PC-3 (cell line): ENCODE measurements at regions of chr5 and their contacts with region 1.

Region 1: DNA sequence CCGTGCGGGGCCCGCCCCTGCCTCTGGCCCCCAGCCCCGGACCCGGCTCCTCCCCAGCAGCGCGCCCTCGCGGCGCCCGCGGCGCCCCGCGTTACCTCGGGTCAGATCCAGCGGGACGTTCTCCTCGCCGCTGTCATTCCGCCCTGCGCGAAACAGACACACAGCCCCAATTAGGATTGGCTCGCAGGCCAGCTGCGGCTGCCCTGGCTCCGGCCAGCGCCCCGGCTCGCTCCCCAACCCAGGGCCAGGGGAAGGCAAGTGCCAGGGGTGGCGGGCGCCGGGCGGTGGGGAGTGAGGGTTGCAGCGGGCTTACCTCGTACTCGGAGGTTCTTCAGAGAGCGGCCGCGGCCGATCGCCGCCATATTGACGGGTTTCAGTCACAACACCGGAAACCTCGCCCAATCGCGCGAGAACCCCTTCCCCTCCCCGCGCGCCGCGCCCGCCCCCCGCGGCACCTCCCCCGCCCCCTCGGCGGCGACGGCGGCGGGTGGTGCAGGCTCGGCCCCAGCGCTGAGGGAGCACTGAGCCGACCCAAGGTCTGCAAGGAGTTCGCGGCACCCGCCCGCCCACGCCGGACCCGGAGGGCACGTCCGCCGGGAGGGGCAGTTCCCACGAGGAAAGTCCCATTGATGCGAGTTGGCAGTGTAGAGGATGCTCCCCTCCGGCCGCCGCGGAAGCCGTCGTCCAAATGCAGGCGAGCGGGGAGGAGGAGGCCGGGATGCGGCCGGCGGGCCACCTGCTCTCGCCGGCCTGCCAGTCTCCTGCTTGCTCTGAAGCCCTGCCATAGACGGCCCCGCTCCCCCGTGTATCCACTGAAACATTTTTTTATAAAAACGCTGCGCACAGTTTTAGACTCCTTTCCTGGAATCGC is at the start of gene RICTOR:
- DNase-seq: peak; percentile 93
- ATAC-seq: peak; percentile 75
- H3K4me3 ChIP-seq: peak within 1 kb of the TSS; percentile 94
- H3K27ac ChIP-seq: peak within 1 kb of the TSS; percentile 87
- H3K4me1 ChIP-seq: peaks cover 40% of the 10 kb centered on the region
- H3K27me3 ChIP-seq: no peaks in the 10 kb centered on the region
- CTCF ChIP-seq: no peak
- total RNA-seq, gene RICTOR: 24.5 and 28.1 TPM in 2 replicates

Region 2: DNA sequence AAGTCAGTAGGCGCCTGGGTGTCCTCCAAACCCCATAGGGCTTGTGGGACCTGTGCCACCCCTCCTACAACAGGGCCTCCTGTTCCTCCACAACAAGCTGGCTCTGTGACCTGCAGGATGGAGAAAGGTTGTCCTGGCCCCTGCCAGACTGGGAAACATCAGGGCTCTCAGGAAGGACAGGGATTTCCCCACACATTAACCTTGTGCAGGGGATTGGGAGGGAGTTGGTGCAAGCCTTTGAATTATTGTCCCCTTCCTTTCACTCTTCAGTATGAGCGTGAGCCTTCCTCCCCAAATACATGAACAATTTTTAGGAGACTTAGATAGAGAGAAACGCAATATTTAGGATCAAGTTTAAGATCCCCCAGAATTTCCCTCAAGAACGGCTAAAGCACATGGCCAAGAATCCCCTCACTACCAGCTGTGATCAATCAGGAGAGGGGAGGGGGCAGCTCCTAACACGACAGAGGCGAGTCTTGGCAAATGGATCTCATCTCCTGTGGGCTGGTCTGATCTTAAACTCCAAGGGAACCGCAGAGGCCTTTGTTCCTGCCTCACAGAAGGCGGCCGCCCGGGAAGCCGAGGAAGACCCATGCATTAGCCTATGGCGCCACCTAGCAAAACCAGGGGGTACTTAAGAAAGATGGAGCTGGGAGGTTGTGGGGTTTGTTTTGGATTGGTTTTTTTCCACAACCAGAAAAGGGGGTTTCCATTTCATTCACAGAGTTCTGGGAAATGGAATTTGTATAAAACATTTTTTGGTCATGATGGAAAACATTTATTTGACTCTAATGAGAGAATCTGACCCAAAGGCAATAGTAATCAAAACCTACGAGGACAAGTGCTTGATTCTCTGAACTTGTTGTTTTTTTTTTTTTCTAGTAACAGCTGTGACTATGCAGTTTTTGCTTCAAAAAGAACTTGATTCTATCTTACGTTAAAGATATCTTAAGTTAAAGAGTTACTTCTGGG is 264.6 kb before region 1 on chr5:
- CTCF ChIA-PET with region 1: no interaction called
- POLR2A ChIA-PET with region 1: no interaction called
- intact Hi-C with region 1: no loop called
- DNase-seq: peak; percentile 90
- ATAC-seq: peak; percentile 53
- H3K4me3 ChIP-seq: no peak overlapping the region
- H3K27ac ChIP-seq: no peak overlapping the region
- H3K4me1 ChIP-seq: peaks cover 41% of the 10 kb centered on the region
- H3K27me3 ChIP-seq: no peaks in the 10 kb centered on the region
- CTCF ChIP-seq: peak; percentile 97

Region 3: GRCh38 chr5:39005566-39006232 is 68.6 kb before region 1 on chr5:
- CTCF ChIA-PET with region 1: interaction called, 3 read pairs
- POLR2A ChIA-PET with region 1: no interaction called
- intact Hi-C with region 1: loop called (anchors 2 kb)
- DNase-seq: peak; percentile 55
- ATAC-seq: peak; percentile 79
- H3K4me3 ChIP-seq: no peak overlapping the region
- H3K27ac ChIP-seq: no peak overlapping the region
- H3K4me1 ChIP-seq: no peaks in the 10 kb centered on the region
- H3K27me3 ChIP-seq: no peaks in the 10 kb centered on the region
- CTCF ChIP-seq: peak; percentile 80

Region 4: GRCh38 chr5:39100851-39101396 is 26.7 kb after region 1 on chr5:
- CTCF ChIA-PET with region 1: no interaction called
- POLR2A ChIA-PET with region 1: interaction called, 6 read pairs
- intact Hi-C with region 1: loop called (anchors 1 kb)
- DNase-seq: peak; percentile 99
- ATAC-seq: peak; percentile 91
- H3K4me3 ChIP-seq: peak overlapping the region; percentile 53; the same call in 1 of the 2 replicates
- H3K27ac ChIP-seq: peak overlapping the region; percentile 97
- H3K4me1 ChIP-seq: peaks cover 52% of the 10 kb centered on the region
- H3K27me3 ChIP-seq: no peaks in the 10 kb centered on the region
- CTCF ChIP-seq: no peak

Region 5: DNA sequence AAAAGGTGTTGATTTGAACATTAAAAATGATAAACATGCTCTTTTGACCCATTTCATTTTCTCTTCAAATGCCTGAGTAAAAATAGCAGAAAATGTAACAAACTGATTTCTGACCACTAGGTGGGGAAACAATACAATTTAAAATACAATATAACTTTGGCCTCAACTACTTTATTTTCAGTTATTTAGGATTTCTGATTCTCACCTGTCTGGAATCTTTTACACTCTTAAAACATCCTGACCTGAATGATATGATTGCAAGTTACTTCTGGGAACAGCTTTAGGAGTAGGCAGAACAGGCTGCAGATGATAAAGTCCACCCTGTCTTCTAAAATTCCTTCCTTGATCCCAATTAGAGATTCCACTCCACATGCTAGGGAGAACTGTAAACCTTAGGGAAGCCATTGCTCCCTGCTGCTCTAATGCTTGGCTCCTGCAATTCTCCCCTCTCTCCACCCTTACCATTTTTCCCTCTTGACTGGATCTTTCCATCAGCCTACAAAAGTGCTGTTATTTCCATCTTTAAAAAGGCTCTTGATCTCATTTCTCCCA is 74.8 kb after region 1 on chr5:
- CTCF ChIA-PET with region 1: no interaction called
- POLR2A ChIA-PET with region 1: no interaction called
- intact Hi-C with region 1: loop called (anchors 2 kb)
- DNase-seq: peak; percentile 74
- ATAC-seq: peak; percentile 69
- H3K4me3 ChIP-seq: no peak overlapping the region
- H3K27ac ChIP-seq: peak overlapping the region; percentile 47; the same call in 1 of the 2 replicates
- H3K4me1 ChIP-seq: peaks cover 7% of the 10 kb centered on the region
- H3K27me3 ChIP-seq: no peaks in the 10 kb centered on the region
- CTCF ChIP-seq: peak; percentile 79

Region 6: GRCh38 chr5:39264528-39264927 is 190.3 kb after region 1 on chr5:
- CTCF ChIA-PET with region 1: no interaction called
- POLR2A ChIA-PET with region 1: no interaction called
- intact Hi-C with region 1: no loop called
- DNase-seq: no peak
- ATAC-seq: no peak
- H3K4me3 ChIP-seq: no peak overlapping the region
- H3K27ac ChIP-seq: no peak overlapping the region
- H3K4me1 ChIP-seq: peaks cover 7% of the 10 kb centered on the region; the same call in 1 of the 2 replicates
- H3K27me3 ChIP-seq: no peaks in the 10 kb centered on the region
- CTCF ChIP-seq: no peak

Region 7: DNA sequence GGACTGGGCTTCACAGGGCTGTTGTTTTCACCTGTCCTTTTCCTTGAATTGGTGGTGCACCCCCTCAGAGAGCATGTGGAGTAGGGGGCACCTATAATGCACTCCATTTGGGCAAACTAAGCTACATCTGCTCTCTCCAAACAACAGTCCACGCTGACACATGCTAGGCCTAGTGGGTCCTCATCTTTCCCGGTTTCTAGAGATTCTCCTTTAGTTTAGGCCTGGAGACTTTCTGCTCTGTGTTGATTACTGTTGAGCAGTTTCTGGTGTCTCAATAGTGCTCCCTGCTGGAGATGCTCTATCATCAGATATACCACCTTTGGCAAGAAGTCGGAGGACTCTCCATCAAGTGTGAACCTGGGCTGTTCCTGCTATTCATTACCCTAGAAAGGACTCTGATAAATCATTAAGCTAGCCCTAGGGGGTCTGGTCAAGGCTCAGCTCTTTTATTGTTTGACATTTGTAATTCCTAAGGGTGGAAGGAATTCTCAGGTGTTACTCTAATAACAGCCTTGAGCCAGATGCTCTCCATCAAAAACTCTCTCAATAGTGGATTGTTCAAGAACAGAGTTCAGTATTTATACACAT is 209.1 kb after region 1 on chr5:
- CTCF ChIA-PET with region 1: no interaction called
- POLR2A ChIA-PET with region 1: no interaction called
- intact Hi-C with region 1: loop called (anchors 2 kb)
- DNase-seq: peak; percentile 90
- ATAC-seq: peak; percentile 97
- H3K4me3 ChIP-seq: no peak overlapping the region
- H3K27ac ChIP-seq: no peak overlapping the region
- H3K4me1 ChIP-seq: peaks cover 7% of the 10 kb centered on the region
- H3K27me3 ChIP-seq: no peaks in the 10 kb centered on the region
- CTCF ChIP-seq: peak; percentile 94